ENCODE measurements at regions of chr10 and their contacts with region 1.

Region 1: GRCh38 chr10:1240341-1240775 is 184.2 kb downstream of the WDR37 start:
- DNase-seq: peak; percentile 31 to 70
- H3K4me3 ChIP-seq: peak overlapping the region in 2 of 4 experiments; percentile 5 to 43; a peak in 2 of 8 replicates
- H3K27ac ChIP-seq: peak overlapping the region; percentile 62
- H3K4me1 ChIP-seq: peaks cover 0 to 6% (median 2%) of the 10 kb centered on the region in 4 experiments; a peak in 6 of 7 replicates
- H3K27me3 ChIP-seq: no peaks in the 10 kb centered on the region; a peak in 1 of 7 replicates
- CTCF ChIP-seq: no peak
- EP300 ChIP-seq: no peak
- POLR2A ChIP-seq: peak in 1 of 2 experiments; percentile 44; a peak in 1 of 3 replicates
- RAD21 ChIP-seq: no peak; a peak in 1 of 4 replicates

Region 2: GRCh38 chr10:1255118-1255517 is 14.8 kb after region 1 on chr10:
- CTCF ChIA-PET with region 1: interaction called, 24 read pairs
- POLR2A ChIA-PET with region 1: no interaction called
- DNase-seq: no peak
- H3K4me3 ChIP-seq: no peak overlapping the region
- H3K27ac ChIP-seq: no peak overlapping the region
- H3K4me1 ChIP-seq: no peaks in the 10 kb centered on the region
- H3K27me3 ChIP-seq: no peaks in the 10 kb centered on the region; a peak in 1 of 7 replicates
- CTCF ChIP-seq: no peak
- EP300 ChIP-seq: no peak
- POLR2A ChIP-seq: no peak
- RAD21 ChIP-seq: no peak

Region 3: GRCh38 chr10:1360011-1360557 is 119.7 kb after region 1 on chr10:
- CTCF ChIA-PET with region 1: interaction called, 12 read pairs
- POLR2A ChIA-PET with region 1: no interaction called
- DNase-seq: peak; percentile 21 to 87
- H3K4me3 ChIP-seq: no peak overlapping the region
- H3K27ac ChIP-seq: no peak overlapping the region
- H3K4me1 ChIP-seq: peaks cover 4 to 20% (median 7%) of the 10 kb centered on the region in 4 experiments
- H3K27me3 ChIP-seq: 0 out of 7 replicates have a peak, but pooled peaks cover 0 to 2% (median 0%) of the 10 kb centered on the region in 4 experiments
- CTCF ChIP-seq: peak; percentile 66 to 85 (median 83)
- EP300 ChIP-seq: no peak
- POLR2A ChIP-seq: no peak
- RAD21 ChIP-seq: peak; percentile 48 to 61

Region 4: DNA sequence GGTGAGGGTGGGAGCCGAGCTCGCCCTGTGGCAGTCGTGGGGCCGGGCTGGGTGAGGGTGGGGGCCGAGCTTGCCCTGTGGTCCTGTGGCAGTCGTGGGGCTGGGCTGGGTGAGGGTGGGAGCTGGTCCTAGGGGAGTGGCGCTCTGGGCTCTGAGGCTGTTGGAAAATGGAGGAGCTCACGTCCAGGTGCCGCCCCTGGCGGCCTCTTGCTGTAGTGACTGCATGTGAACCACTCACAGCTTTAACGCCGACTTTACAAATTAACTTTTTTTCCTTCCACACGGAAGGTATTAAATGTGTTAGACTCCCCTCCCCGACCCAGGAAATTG is 128.4 kb after region 1 on chr10:
- CTCF ChIA-PET with region 1: interaction called, 24 read pairs
- POLR2A ChIA-PET with region 1: no interaction called
- DNase-seq: peak; percentile 43 to 74
- H3K4me3 ChIP-seq: peak overlapping the region in 1 of 4 experiments; percentile 11; a peak in 1 of 8 replicates
- H3K27ac ChIP-seq: no peak overlapping the region
- H3K4me1 ChIP-seq: peaks cover 0 to 6% (median 4%) of the 10 kb centered on the region in 4 experiments; a peak in 5 of 7 replicates
- H3K27me3 ChIP-seq: no peaks in the 10 kb centered on the region
- CTCF ChIP-seq: peak; percentile 72 to 78 (median 73)
- EP300 ChIP-seq: no peak
- POLR2A ChIP-seq: no peak
- RAD21 ChIP-seq: peak; percentile 67 to 69

Measured in H1 (cell line).